ENCODE measurements at regions of chr14 and their contacts with region 1.

Region 1: DNA sequence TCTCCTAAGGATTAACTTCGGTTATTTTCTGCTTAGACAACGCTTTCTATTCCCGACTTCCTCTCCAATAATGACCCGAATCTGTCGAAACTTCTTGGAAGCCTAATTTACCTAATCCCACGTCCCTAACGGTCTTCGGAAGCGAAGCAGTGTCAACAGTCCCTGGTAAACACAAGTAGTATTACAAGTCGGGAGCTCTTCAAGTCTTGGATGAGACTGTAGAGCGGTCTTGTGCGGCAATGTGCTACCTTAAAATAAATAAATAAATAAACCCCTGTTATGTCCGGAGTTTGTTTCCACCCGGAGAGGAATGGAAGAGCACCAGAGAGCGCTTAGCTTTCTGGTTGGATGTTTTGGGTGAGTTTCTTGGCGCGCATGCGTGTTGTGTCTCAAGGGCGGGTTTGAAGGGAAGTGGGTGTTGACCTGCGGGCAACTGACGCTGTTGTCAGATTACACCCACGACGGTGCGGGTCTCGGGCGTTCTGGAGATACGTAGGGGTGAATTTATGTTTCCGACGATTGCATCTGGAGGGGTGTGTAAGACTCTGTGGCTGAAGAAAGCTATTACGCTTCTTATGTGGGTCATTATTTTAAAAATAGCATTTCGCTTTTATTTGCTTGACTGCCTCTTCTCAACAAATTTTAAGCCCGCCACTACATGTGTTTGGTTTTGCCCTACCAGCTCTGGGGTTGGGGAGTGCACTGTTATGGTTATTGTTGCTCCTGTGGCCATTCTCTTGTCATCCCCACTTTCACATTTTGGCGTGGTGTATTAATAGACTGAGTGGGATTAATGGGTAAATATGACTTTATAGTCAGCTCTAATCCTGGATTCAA is at the starts of genes KIAA0586 and TIMM9:
- DNase-seq: peak; percentile 98
- H3K4me3 ChIP-seq: peak within 1 kb of the TSS; percentile 72 to 96 (median 85)
- H3K27ac ChIP-seq: peak within 1 kb of the TSS; percentile 95
- H3K4me1 ChIP-seq: peaks cover 21% of the 10 kb centered on the region
- H3K27me3 ChIP-seq: no peaks in the 10 kb centered on the region
- CTCF ChIP-seq: no peak
- POLR2A ChIP-seq: peak; percentile 88
- total RNA-seq, gene KIAA0586: 25.9 and 29.2 TPM in 2 replicates
- total RNA-seq, gene TIMM9: 38.0 and 42.4 TPM in 2 replicates

Region 2: GRCh38 chr14:58244556-58245387 is 182.7 kb before region 1 on chr14 and contains the start of gene PSMA3:
- CTCF ChIA-PET with region 1: no interaction called
- POLR2A ChIA-PET with region 1: interaction called, 3 read pairs
- dilution Hi-C with region 1: no loop called
- intact Hi-C with region 1: loop called (anchors 2 kb)
- DNase-seq: peak; percentile 98
- H3K4me3 ChIP-seq: peak within 1 kb of the TSS; percentile 77 to 98 (median 85)
- H3K27ac ChIP-seq: peak within 1 kb of the TSS; percentile 93
- H3K4me1 ChIP-seq: peaks cover 22% of the 10 kb centered on the region
- H3K27me3 ChIP-seq: no peaks in the 10 kb centered on the region
- CTCF ChIP-seq: no peak
- POLR2A ChIP-seq: peak; percentile 95
- total RNA-seq, gene PSMA3: 228 and 240 TPM in 2 replicates

Region 3: GRCh38 chr14:58395812-58396788 is 31.4 kb before region 1 on chr14 and contains the start of gene TOMM20L:
- CTCF ChIA-PET with region 1: interaction called, 9 read pairs
- POLR2A ChIA-PET with region 1: no interaction called
- dilution Hi-C with region 1: no loop called
- intact Hi-C with region 1: loop called (anchors 1 kb)
- DNase-seq: peak; percentile 68
- H3K4me3 ChIP-seq: peak within 1 kb of the TSS; percentile 1 to 52 (median 51)
- H3K27ac ChIP-seq: peak within 1 kb of the TSS; percentile 40
- H3K4me1 ChIP-seq: peaks cover 10% of the 10 kb centered on the region
- H3K27me3 ChIP-seq: no peaks in the 10 kb centered on the region
- CTCF ChIP-seq: peak; percentile 58 to 97
- POLR2A ChIP-seq: peak; percentile 54
- total RNA-seq, gene TOMM20L: not detected in 2 replicates

Region 4: GRCh38 chr14:58444627-58445026 is 17.1 kb after region 1 on chr14:
- CTCF ChIA-PET with region 1: no interaction called
- POLR2A ChIA-PET with region 1: no interaction called
- dilution Hi-C with region 1: no loop called
- intact Hi-C with region 1: no loop called
- DNase-seq: no peak
- H3K4me3 ChIP-seq: no peak overlapping the region
- H3K27ac ChIP-seq: no peak overlapping the region
- H3K4me1 ChIP-seq: no peaks in the 10 kb centered on the region
- H3K27me3 ChIP-seq: no peaks in the 10 kb centered on the region
- CTCF ChIP-seq: no peak
- POLR2A ChIP-seq: no peak

Region 5: DNA sequence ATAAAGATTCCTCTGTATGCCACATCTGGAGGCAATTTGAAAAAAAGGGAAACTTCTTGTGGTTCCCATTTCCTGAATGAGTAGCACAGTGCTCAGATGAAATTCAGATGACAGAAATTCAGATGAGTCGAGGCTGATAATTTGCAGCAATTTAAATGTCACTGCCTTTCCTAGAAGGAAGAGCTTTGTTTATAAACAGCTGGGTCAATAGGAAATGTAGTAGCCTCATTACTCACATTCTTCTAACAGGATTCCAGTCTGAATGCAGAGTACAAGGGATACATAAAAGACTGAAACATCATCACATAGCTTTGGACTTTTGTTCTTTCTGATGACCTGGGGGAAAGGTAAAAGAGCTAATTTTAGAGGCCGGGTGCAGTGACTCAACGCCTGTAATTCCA is 198.9 kb after region 1 on chr14:
- CTCF ChIA-PET with region 1: no interaction called
- POLR2A ChIA-PET with region 1: no interaction called
- dilution Hi-C with region 1: no loop called
- intact Hi-C with region 1: no loop called
- DNase-seq: no peak
- H3K4me3 ChIP-seq: no peak overlapping the region
- H3K27ac ChIP-seq: no peak overlapping the region
- H3K4me1 ChIP-seq: no peaks in the 10 kb centered on the region
- H3K27me3 ChIP-seq: peaks cover 3 to 8% of the 10 kb centered on the region in 2 experiments
- CTCF ChIP-seq: no peak
- POLR2A ChIP-seq: no peak